Heart left ventricle (tissue), 16 donors: ENCODE measurements at regions of chr3 and their contacts with region 1.

Region 1: DNA sequence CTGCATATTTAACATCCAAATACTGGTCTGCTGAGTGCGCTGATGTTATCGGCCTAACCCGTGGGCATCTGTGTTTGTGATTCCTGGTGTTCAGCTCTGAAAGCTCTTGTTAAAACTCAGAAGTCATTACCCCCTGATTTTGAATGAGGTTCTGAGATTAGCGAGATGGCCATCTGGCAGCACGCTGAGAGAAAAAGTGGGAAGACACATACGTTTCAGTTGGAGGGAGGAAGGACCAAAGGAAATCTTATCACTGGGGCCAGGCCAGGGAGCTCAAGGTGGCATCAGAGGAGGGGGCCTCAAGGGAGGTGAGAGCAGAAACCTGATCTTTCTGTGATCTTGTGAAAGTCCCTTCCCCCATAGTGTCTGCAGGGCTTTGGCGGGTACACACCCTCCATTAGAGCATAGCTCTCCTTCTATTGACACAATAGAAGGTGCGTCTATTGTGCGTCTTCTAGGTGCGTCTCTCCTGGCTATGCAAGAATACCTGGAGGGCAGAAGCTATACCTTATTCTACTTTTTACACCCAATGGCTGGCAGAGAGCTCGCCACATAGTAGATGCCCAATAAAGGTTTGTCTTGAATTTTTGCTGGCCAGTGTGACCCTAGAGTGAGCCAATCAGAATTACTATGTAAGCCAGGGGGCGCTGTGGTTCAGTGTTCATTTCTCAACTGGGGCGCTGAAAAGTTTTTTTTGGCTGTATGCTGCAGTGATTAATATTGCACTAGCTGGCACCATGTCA is 182.4 kb downstream of the SHQ1 start:
- DNase-seq: peak in 1 of 5 donors; percentile 26
- ATAC-seq: peak in 3 of 4 donors; percentile 14 to 48 (median 43)
- H3K4me3 ChIP-seq: no peak overlapping the region
- H3K27ac ChIP-seq: no peak overlapping the region
- H3K4me1 ChIP-seq: peaks cover 0 to 6% (median under 1%) of the 10 kb centered on the region in 12 donors
- H3K27me3 ChIP-seq: no peaks in the 10 kb centered on the region
- CTCF ChIP-seq: peak; percentile 32 to 57 (median 47)
- POLR2A ChIP-seq: no peak

Region 2: DNA sequence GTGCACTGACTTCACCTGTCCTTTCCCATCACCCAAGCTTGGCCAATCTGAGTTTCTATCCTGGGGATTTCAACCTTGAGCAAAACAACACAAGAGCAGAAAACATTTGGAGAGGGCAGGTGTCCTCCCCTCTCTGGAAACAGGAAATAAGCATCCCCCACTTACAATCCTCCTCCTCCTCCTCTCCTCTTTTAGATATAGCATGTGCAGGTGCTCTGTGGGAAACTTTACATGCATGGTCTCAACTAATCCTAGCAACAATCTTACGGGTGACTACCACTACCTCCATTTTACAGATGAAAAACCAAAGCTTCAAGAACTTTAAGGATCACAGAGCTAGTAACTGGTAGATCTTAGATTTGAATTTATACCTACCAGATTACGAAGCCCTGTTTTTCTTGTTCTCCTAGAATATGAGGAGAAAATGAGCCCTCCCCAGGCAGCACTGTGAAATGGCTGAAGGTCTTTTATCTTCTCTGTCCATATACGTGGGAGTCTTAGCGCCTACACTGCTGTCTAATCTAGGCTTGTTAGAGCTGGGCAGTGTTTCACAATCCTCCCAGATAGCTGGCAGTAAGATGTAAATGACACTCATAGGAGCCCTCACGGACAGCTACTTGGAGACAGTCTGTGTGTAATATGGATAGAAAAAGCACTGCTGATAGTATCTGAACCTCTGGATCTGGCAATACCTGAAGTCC is 579.7 kb before region 1 on chr3:
- intact Hi-C with region 1: no loop called
- DNase-seq: no peak
- ATAC-seq: peak in 3 of 4 donors; percentile 41 to 84 (median 78)
- H3K4me3 ChIP-seq: no peak overlapping the region
- H3K27ac ChIP-seq: peak overlapping the region in 1 of 12 donors; percentile 60
- H3K4me1 ChIP-seq: peaks cover 0 to 43% (median 0%) of the 10 kb centered on the region in 12 donors
- H3K27me3 ChIP-seq: no peaks in the 10 kb centered on the region
- CTCF ChIP-seq: no peak
- POLR2A ChIP-seq: no peak

Region 3: DNA sequence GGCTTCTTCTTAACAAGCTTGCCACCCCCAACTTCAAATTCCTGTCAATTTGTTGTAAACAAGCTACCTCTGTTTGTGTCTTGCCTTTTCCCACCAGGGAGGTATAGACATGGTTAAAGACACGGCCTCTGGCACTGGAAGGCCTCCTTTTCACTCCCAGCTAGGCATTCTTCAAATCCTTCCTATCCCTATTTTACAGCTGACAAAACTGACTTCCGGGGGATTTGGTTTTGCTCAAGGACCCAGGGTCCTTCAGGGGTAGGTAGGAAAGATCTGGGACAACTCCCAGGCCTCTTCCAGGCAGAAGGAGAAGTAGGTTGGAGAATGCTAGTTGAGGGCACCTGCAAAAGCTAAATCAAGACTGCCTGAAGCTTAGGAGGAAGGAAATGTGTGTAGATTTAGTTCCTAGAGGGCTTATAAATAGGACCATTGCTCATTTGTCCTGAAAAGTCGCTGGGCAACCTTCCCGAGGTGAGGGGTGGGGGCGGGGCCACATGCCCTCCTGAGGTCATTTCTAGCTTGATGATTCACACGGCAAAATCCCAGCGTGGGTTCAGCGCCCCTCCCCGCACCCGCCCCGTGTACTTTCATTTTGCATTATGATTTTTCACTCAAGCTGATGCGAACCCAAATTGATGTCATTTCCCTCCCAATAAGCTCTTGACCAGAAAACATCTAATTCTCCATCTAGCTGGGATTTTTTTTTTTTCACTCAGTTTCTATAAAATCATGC is 183.1 kb before region 1 on chr3:
- intact Hi-C with region 1: loop called in 1 of 10 experiments (anchors 5 kb)
- DNase-seq: peak; percentile 68 to 82 (median 74)
- ATAC-seq: peak; percentile 74 to 94 (median 88)
- H3K4me3 ChIP-seq: peak overlapping the region in 10 of 12 donors; percentile 14 to 52 (median 37)
- H3K27ac ChIP-seq: peak overlapping the region in 10 of 12 donors; percentile 50 to 88 (median 67)
- H3K4me1 ChIP-seq: peaks cover 0 to 40% (median 25%) of the 10 kb centered on the region in 12 donors
- H3K27me3 ChIP-seq: no peaks in the 10 kb centered on the region
- CTCF ChIP-seq: no peak
- POLR2A ChIP-seq: no peak

Region 4: DNA sequence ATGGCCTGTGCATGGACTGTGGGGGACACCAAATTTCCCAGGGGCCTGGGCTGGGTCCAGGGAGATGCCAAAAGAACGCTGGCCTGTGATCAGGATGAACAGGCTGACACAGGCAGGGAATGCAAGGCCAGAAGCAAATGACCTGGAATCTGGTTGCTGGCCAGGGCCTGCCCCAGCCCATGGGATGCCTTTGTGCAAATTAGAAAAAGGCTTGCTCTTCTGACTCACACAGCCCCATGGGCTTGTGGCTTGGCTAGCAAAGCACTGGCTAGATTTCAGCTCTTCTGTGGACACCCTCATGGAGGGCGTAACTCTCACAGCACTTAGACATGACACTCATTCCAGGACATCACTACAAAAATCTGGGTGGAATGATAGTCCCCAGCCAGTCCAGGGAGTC is 173.6 kb before region 1 on chr3:
- intact Hi-C with region 1: loop called in 1 of 10 experiments (anchors 5 kb)
- DNase-seq: peak; percentile 45 to 81 (median 68)
- ATAC-seq: peak; percentile 41 to 89 (median 87)
- H3K4me3 ChIP-seq: no peak overlapping the region
- H3K27ac ChIP-seq: no peak overlapping the region
- H3K4me1 ChIP-seq: peaks cover 0 to 40% (median 8%) of the 10 kb centered on the region in 12 donors
- H3K27me3 ChIP-seq: no peaks in the 10 kb centered on the region
- CTCF ChIP-seq: no peak
- POLR2A ChIP-seq: no peak

Region 5: GRCh38 chr3:72679540-72680198 is 13.8 kb after region 1 on chr3:
- intact Hi-C with region 1: no loop called
- DNase-seq: no peak
- ATAC-seq: no peak
- H3K4me3 ChIP-seq: no peak overlapping the region
- H3K27ac ChIP-seq: no peak overlapping the region
- H3K4me1 ChIP-seq: no peaks in the 10 kb centered on the region
- H3K27me3 ChIP-seq: no peaks in the 10 kb centered on the region
- CTCF ChIP-seq: no peak
- POLR2A ChIP-seq: no peak

Region 6: GRCh38 chr3:72745146-72745999 is 79.5 kb after region 1 on chr3:
- intact Hi-C with region 1: no loop called
- DNase-seq: no peak
- ATAC-seq: peak in 2 of 4 donors; percentile 28 to 61
- H3K4me3 ChIP-seq: no peak overlapping the region
- H3K27ac ChIP-seq: no peak overlapping the region
- H3K4me1 ChIP-seq: peaks cover 0 to 10% (median 0%) of the 10 kb centered on the region in 12 donors
- H3K27me3 ChIP-seq: no peaks in the 10 kb centered on the region
- CTCF ChIP-seq: no peak
- POLR2A ChIP-seq: no peak